HCT116 (cell line): ENCODE measurements at regions of chr15 and their contacts with region 1.

Region 1: GRCh38 chr15:89129123-89129815 is 41.0 kb downstream of the ABHD2 start:
- DNase-seq: no peak
- ATAC-seq: peak; percentile 81
- H3K4me3 ChIP-seq: no peak overlapping the region
- H3K27ac ChIP-seq: no peak overlapping the region
- H3K4me1 ChIP-seq: peaks cover 0 to 17% of the 10 kb centered on the region in 2 experiments; a peak in 2 of 4 replicates
- H3K27me3 ChIP-seq: no peaks in the 10 kb centered on the region
- CTCF ChIP-seq: peak; percentile 83 to 93 (median 91)
- POLR2A ChIP-seq: no peak
- RAD21 ChIP-seq: peak; percentile 76

Region 2: DNA sequence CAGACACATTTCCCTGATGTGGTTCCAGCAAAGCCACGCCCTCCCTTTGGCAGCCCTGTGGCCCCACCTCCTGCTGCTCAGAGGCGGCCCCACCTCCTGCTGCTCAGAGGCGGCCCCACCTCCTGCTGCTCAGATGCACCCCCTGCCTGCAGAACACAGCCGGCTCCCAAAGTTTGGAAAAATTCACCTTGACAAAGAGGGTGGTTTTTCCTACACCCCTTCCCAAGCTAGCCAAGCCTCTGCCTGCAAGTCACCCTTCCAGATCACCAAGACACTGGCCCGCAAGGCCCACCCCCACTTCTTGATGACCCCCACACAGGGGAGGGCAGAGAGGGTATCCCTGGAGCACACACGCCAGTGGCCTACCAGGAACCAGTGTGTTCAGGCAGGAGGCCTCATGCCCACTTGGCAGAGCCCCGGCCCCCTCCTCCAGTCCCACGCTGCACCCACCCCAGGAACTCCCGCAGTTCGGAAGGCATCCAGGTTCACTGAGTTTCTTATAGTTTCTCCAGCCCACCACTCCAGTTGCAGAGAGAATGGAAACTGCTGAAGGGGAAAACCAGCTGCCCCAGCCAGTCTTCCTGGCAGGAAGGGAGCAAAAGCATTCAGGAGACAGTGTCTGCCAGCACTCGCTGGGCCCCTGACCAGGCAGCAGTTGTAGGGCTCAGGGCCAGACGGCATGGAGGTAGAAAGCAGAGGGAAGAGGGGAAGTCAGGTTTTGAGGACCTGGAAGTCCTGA is 231.6 kb before region 1 on chr15:
- CTCF ChIA-PET with region 1: no interaction called
- POLR2A ChIA-PET with region 1: no interaction called
- RAD21 ChIA-PET with region 1: no interaction called
- intact Hi-C with region 1: loop called (anchors 5 kb)
- DNase-seq: no peak
- ATAC-seq: peak; percentile 86
- H3K4me3 ChIP-seq: no peak overlapping the region
- H3K27ac ChIP-seq: peak overlapping the region; percentile 23; the same call in 1 of the 2 replicates
- H3K4me1 ChIP-seq: peaks cover 23 to 50% of the 10 kb centered on the region in 2 experiments
- H3K27me3 ChIP-seq: no peaks in the 10 kb centered on the region
- CTCF ChIP-seq: peak; percentile 50 to 75 (median 60); a peak in 5 of 6 replicates
- POLR2A ChIP-seq: no peak
- RAD21 ChIP-seq: 0 out of 2 replicates have a peak, but pooled peaks have one; percentile 5

Region 3: DNA sequence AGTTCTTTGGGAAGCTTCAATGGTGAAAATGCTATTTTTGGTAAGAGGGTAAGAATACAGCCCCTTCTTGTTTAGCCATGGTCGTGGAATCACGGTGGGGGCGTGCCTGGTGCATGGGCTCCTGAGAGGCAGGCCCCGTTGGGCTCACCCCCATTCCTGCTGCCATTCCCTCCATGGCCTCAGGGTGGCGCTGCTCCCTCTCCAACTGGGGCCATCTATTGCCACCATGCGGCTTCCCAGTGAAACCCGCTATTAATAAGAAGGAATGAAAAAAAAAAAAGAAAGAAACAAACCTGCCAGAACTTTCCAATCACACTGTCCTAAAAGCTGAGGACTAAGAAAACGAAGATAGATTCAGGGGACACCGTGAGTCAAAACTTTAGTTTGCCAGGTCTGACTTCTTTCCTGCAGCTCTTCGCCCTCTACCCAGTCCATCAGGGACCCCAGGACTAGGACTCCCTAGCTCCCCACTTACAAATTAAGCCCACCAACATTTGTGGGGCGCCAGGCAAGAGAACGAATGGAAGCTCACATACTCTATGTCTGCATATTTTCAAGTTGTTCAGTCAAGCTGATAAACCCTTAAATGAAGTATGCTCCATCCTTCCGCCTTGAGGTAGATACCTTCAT is 71.7 kb before region 1 on chr15:
- CTCF ChIA-PET with region 1: interaction called, 20 read pairs
- POLR2A ChIA-PET with region 1: no interaction called
- RAD21 ChIA-PET with region 1: interaction called, 5 to 6 read pairs
- intact Hi-C with region 1: loop called (anchors 1 kb)
- DNase-seq: peak; percentile 45
- ATAC-seq: peak; percentile 98
- H3K4me3 ChIP-seq: no peak overlapping the region
- H3K27ac ChIP-seq: no peak overlapping the region
- H3K4me1 ChIP-seq: peaks cover 0 to 6% of the 10 kb centered on the region in 2 experiments; a peak in 1 of 4 replicates
- H3K27me3 ChIP-seq: no peaks in the 10 kb centered on the region
- CTCF ChIP-seq: peak; percentile 98 to 99 (median 99)
- POLR2A ChIP-seq: no peak
- RAD21 ChIP-seq: peak; percentile 97

Region 4: DNA sequence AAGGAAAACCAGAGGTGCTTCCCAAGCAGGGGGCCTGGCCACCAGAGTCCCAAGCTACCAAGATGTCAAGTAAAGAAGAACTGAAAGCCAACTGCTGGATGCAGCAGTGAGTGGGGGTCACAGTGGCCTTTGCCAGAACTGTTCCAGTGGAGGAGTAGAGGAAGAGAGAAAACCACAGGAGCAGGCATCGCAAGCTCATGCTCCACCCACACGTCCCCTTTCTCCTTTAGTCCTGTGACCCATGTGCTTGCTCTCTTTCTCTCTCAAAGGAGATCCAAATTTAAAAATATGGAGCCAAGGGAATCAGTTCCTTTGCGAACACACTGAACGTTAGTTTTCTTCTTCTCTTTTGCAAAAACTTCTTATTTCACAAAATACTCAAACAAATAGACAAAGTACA is 53.4 kb before region 1 on chr15:
- CTCF ChIA-PET with region 1: no interaction called
- POLR2A ChIA-PET with region 1: no interaction called
- RAD21 ChIA-PET with region 1: no interaction called
- intact Hi-C with region 1: loop called (anchors 5 kb)
- DNase-seq: no peak
- ATAC-seq: no peak
- H3K4me3 ChIP-seq: no peak overlapping the region
- H3K27ac ChIP-seq: no peak overlapping the region
- H3K4me1 ChIP-seq: peaks cover 0 to 14% of the 10 kb centered on the region in 2 experiments; a peak in 2 of 4 replicates
- H3K27me3 ChIP-seq: no peaks in the 10 kb centered on the region
- CTCF ChIP-seq: no peak
- POLR2A ChIP-seq: no peak
- RAD21 ChIP-seq: no peak

Region 5: DNA sequence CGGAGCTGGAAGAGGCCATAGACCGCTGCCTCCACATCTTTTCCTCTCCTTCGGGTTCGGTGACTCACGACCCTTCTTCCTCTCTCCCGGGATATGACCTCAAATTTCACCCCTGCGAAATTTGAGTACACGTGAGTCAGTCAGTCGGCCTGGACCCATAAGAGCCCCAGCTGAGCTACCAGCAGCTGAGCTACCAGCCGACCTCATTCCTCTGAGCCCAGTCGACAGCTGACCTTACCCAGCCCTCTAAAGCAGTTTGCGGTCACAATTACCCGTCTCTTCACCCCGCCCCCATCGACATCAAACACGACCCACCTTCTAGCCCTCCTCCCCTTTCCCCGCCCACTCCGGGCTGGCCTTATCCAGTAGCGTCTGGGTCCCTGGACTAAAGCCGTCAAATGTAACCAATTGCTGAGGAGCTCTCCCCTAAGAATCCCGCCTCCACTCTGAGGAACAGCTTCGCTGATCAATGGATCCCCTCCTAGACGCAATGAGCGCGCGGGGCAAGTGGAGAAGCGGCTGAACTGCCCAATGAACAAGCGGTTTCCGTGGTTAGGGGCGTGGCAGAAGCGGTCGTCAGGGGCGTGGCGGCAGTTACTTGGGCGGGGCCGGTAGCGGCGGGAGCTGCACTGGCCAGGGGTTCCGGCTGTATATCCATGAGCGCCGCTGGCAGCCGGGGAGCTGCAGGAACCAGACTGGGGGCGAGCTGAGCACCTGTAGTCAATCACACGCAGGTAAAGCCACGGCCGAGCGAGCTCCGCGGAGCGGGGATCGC is 41.3 kb before region 1 on chr15 and contains the start of gene ABHD2:
- CTCF ChIA-PET with region 1: interaction called, 14 read pairs
- POLR2A ChIA-PET with region 1: no interaction called
- RAD21 ChIA-PET with region 1: no interaction called
- intact Hi-C with region 1: no loop called
- DNase-seq: peak; percentile 100
- ATAC-seq: peak; percentile 98
- H3K4me3 ChIP-seq: peak within 1 kb of the TSS; percentile 86 to 89
- H3K27ac ChIP-seq: peak within 1 kb of the TSS; percentile 57
- H3K4me1 ChIP-seq: peaks cover 12 to 35% of the 10 kb centered on the region in 2 experiments
- H3K27me3 ChIP-seq: no peaks in the 10 kb centered on the region
- CTCF ChIP-seq: no peak
- POLR2A ChIP-seq: no peak
- RAD21 ChIP-seq: no peak
- total RNA-seq, gene ABHD2: 40.8 TPM

Region 6: GRCh38 chr15:89150762-89151664 is 21.7 kb after region 1 on chr15:
- CTCF ChIA-PET with region 1: interaction called, 11 read pairs
- POLR2A ChIA-PET with region 1: no interaction called
- RAD21 ChIA-PET with region 1: no interaction called
- intact Hi-C with region 1: no loop called
- DNase-seq: no peak
- ATAC-seq: no peak
- H3K4me3 ChIP-seq: no peak overlapping the region
- H3K27ac ChIP-seq: no peak overlapping the region
- H3K4me1 ChIP-seq: no peaks in the 10 kb centered on the region
- H3K27me3 ChIP-seq: no peaks in the 10 kb centered on the region
- CTCF ChIP-seq: no peak
- POLR2A ChIP-seq: no peak
- RAD21 ChIP-seq: no peak

Region 7: GRCh38 chr15:89171136-89172072 is 42.1 kb after region 1 on chr15:
- CTCF ChIA-PET with region 1: interaction called, 13 read pairs
- POLR2A ChIA-PET with region 1: no interaction called
- RAD21 ChIA-PET with region 1: no interaction called
- intact Hi-C with region 1: no loop called
- DNase-seq: peak; percentile 32
- ATAC-seq: peak; percentile 66
- H3K4me3 ChIP-seq: no peak overlapping the region
- H3K27ac ChIP-seq: no peak overlapping the region
- H3K4me1 ChIP-seq: peaks cover 20 to 26% of the 10 kb centered on the region in 2 experiments
- H3K27me3 ChIP-seq: no peaks in the 10 kb centered on the region
- CTCF ChIP-seq: peak; percentile 87 to 89 (median 88)
- POLR2A ChIP-seq: no peak
- RAD21 ChIP-seq: peak; percentile 83

Region 8: GRCh38 chr15:89543389-89543788 is 414.1 kb after region 1 on chr15:
- CTCF ChIA-PET with region 1: no interaction called
- POLR2A ChIA-PET with region 1: no interaction called
- RAD21 ChIA-PET with region 1: no interaction called
- intact Hi-C with region 1: no loop called
- DNase-seq: no peak
- ATAC-seq: no peak
- H3K4me3 ChIP-seq: no peak overlapping the region
- H3K27ac ChIP-seq: no peak overlapping the region
- H3K4me1 ChIP-seq: no peaks in the 10 kb centered on the region
- H3K27me3 ChIP-seq: no peaks in the 10 kb centered on the region
- CTCF ChIP-seq: no peak
- POLR2A ChIP-seq: no peak
- RAD21 ChIP-seq: no peak